Caco-2 (cell line): ENCODE measurements at regions of chr12 and their contacts with region 1.

Region 1: DNA sequence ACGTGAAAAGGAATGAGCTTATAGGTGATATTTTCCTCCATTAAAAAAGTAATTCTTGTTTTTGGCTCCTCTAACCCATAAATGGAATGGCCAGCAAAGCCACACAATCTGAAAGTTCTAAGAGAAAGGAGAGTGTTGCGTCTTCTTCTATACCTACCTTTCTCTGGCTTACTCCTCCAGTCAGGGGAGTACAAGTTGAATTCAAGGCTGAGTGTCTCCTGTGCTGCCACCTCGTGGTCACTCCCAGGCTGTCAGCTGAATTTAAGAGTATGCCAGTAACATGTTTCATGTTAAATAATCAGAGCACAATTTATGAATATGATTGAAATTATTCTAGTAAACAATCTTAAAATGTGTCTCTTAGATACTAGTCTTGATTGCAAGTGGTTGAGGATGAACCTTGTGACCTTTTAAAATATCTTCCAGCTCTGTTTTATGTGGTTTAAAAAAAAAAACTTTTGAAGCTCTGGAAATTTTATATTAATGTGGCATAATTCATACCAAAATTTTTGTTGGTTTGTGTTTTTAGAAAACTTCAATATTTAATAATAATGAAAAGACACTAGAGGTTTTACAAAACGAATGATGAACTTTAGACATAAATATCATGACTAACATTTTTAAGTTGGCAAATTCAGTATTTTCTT is 31.7 kb downstream of the PTHLH start:
- DNase-seq: peak; percentile 83 to 87
- H3K4me3 ChIP-seq: no peak overlapping the region
- H3K4me3 Mint-ChIP-seq: no peak overlapping the region
- H3K27ac Mint-ChIP-seq: no peak overlapping the region
- H3K4me1 ChIP-seq: no peaks in the 10 kb centered on the region
- H3K4me1 Mint-ChIP-seq: no peaks in the 10 kb centered on the region
- H3K27me3 ChIP-seq: no peaks in the 10 kb centered on the region
- H3K27me3 Mint-ChIP-seq: peaks cover 4% of the 10 kb centered on the region
- CTCF ChIP-seq: peak; percentile 93 to 95

Region 2: DNA sequence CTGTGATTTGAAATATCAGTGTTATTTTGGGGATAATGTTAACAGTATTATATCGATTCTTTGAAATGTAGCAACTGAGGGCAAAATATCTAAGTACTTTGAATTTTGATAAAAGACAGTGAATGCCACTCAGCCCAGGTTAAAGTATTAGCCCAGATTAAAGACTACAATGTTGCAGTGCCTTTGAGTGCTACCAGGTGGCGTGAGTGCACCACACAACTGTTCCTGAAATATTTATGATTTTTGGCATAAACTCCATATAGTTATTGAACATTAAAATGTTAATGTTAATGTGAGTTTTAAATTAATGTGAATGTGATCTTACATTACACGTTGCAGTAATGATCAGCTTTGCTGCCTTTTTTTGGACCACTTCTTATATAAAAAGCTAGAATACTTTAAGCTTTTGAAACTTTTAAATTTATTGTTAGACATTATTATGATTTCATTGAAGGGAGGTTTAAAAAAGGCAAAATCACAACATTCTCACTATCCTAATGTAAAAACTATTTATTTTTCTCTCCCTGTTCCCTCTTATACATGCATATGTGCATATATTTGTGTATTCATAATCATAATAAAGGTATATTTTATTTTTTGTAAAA is 207.7 kb before region 1 on chr12:
- CTCF ChIA-PET with region 1: interaction called, 6 read pairs
- POLR2A ChIA-PET with region 1: no interaction called
- intact Hi-C with region 1: loop called (anchors 1 kb)
- DNase-seq: peak in 1 of 2 experiments; percentile 49
- H3K4me3 ChIP-seq: no peak overlapping the region
- H3K4me3 Mint-ChIP-seq: no peak overlapping the region
- H3K27ac Mint-ChIP-seq: no peak overlapping the region
- H3K4me1 ChIP-seq: no peaks in the 10 kb centered on the region
- H3K4me1 Mint-ChIP-seq: no peaks in the 10 kb centered on the region
- H3K27me3 ChIP-seq: no peaks in the 10 kb centered on the region
- H3K27me3 Mint-ChIP-seq: no peaks in the 10 kb centered on the region
- CTCF ChIP-seq: peak; percentile 89 to 93

Region 3: DNA sequence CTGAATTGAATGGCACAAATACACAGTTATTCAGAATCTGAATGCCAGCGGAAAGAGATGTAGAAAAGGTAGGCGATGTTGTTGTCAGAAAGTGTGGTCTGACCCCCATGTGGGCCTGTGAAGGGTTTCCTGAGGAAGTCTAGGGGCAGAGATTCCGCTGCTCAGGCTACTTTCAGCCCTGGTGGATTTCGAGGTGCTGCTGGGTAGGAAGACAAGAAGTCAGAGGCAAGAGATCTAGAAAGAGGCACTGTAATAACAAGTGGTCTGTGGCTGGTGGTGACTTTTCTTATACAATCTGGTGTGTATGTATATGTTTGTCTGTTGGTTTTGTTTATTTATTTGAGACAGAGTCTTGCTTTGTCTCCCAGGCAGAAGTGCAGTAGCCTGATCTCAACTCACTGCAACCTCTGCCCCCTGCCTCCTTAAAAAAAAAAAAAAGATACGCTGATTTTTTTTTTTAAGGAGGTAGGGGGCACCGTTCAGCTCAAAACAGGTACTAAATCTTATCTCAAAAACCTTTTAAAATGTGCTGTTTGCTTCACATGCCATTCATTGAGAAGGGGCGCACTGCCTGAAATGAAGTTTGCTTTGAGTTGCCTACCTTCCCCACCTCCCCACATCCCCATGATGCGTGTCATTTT is 133.7 kb before region 1 on chr12:
- CTCF ChIA-PET with region 1: interaction called, 7 read pairs
- POLR2A ChIA-PET with region 1: no interaction called
- intact Hi-C with region 1: loop called (anchors 1 kb)
- DNase-seq: no peak
- H3K4me3 ChIP-seq: no peak overlapping the region
- H3K4me3 Mint-ChIP-seq: no peak overlapping the region
- H3K27ac Mint-ChIP-seq: no peak overlapping the region
- H3K4me1 ChIP-seq: no peaks in the 10 kb centered on the region
- H3K4me1 Mint-ChIP-seq: peaks cover 7% of the 10 kb centered on the region
- H3K27me3 ChIP-seq: no peaks in the 10 kb centered on the region
- H3K27me3 Mint-ChIP-seq: no peaks in the 10 kb centered on the region
- CTCF ChIP-seq: peak in 1 of 2 experiments; percentile 30

Region 4: DNA sequence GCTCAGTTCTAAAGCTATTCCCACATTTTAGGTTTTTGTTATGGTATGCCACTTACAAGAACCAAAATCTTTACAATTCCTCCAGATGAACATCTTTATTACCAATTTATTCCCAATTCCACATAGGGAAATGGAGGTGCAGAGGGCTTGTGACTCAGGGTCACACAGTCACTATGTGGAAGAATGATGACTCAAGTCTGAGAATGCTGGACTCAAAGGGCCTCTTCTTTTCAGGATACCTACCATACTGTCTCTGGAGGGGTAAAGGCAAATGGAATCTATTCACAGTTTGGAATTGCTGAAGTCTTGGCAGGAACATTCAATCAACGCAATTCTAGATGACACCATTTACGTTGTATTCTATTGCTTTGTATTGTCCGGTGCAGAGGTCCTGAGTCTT is 112.7 kb before region 1 on chr12:
- CTCF ChIA-PET with region 1: no interaction called
- POLR2A ChIA-PET with region 1: no interaction called
- intact Hi-C with region 1: loop called (anchors 2 kb)
- DNase-seq: no peak
- H3K4me3 ChIP-seq: no peak overlapping the region
- H3K4me3 Mint-ChIP-seq: no peak overlapping the region
- H3K27ac Mint-ChIP-seq: no peak overlapping the region
- H3K4me1 ChIP-seq: no peaks in the 10 kb centered on the region
- H3K4me1 Mint-ChIP-seq: no peaks in the 10 kb centered on the region
- H3K27me3 ChIP-seq: no peaks in the 10 kb centered on the region
- H3K27me3 Mint-ChIP-seq: no peaks in the 10 kb centered on the region
- CTCF ChIP-seq: no peak

Region 5: DNA sequence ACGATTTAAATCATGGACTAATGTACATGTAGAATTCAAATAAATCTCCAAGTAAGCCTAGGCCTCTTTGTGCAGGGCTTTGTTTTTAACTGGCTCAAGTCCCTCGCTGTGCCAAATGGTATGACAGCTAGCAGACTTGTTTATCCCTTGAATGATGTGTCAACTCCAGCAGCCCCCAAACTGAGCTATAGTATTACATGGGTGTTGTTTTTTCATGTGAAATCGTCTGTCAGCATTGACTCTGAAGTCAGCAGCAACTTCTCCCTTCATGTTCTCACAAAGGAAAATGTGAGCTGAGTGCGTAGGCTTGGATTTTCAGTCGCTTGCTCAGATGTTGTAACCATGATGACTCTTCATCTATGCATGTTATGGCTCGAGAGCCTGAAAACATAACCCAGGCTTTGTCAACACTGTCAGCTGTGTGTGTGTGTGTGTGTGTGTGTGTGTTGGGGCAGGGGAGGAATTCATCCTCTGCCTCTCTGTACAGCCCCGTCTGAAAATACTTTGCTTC is 41.7 kb before region 1 on chr12:
- CTCF ChIA-PET with region 1: no interaction called
- POLR2A ChIA-PET with region 1: no interaction called
- intact Hi-C with region 1: loop called (anchors 1 kb)
- DNase-seq: peak; percentile 56 to 58
- H3K4me3 ChIP-seq: no peak overlapping the region
- H3K4me3 Mint-ChIP-seq: no peak overlapping the region
- H3K27ac Mint-ChIP-seq: peak overlapping the region; percentile 24
- H3K4me1 ChIP-seq: peaks cover 32% of the 10 kb centered on the region
- H3K4me1 Mint-ChIP-seq: peaks cover 22% of the 10 kb centered on the region
- H3K27me3 ChIP-seq: 0 out of 2 replicates have a peak, but pooled peaks cover 2% of the 10 kb centered on the region
- H3K27me3 Mint-ChIP-seq: no peaks in the 10 kb centered on the region
- CTCF ChIP-seq: no peak